Heart left ventricle (tissue), 16 donors: ENCODE measurements at regions of chr9 and their contacts with region 1.

Region 1: GRCh38 chr9:115900699-115901098 is 252.9 kb upstream of the PAPPA start:
- DNase-seq: no peak
- ATAC-seq: no peak
- H3K4me3 ChIP-seq: no peak overlapping the region
- H3K27ac ChIP-seq: no peak overlapping the region
- H3K4me1 ChIP-seq: no peaks in the 10 kb centered on the region
- H3K27me3 ChIP-seq: no peaks in the 10 kb centered on the region
- CTCF ChIP-seq: no peak
- POLR2A ChIP-seq: no peak

Region 2: GRCh38 chr9:115442054-115442453 is 458.6 kb before region 1 on chr9:
- intact Hi-C with region 1: no loop called
- DNase-seq: no peak
- ATAC-seq: peak in 3 of 4 donors; percentile 64 to 78 (median 74)
- H3K4me3 ChIP-seq: no peak overlapping the region
- H3K27ac ChIP-seq: peak overlapping the region in 6 of 12 donors; percentile 9 to 51 (median 31)
- H3K4me1 ChIP-seq: peaks cover 0 to 8% (median 0%) of the 10 kb centered on the region in 12 donors
- H3K27me3 ChIP-seq: no peaks in the 10 kb centered on the region
- CTCF ChIP-seq: no peak
- POLR2A ChIP-seq: no peak

Region 3: DNA sequence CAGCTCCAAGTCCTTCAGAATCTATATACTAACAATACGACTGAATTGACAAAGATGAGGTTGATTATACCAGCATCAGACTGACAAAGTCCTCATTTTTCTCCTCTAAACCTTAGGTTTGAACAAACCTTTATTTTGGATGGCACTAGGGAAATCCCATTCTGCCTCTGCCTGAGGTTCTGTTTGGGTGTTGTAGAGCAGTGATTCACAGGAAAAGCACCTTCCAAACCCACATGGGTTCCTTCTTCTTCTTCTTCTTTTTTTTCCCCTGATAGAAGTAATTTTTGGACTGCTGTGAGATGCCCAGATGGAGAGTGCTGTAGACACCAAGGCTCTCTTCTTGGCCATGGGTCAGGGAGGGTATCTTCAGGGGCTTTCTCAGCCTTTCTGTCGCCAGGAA is 88.0 kb after region 1 on chr9:
- intact Hi-C with region 1: loop called in 1 of 10 experiments (anchors 10 kb)
- DNase-seq: no peak
- ATAC-seq: no peak
- H3K4me3 ChIP-seq: no peak overlapping the region
- H3K27ac ChIP-seq: no peak overlapping the region
- H3K4me1 ChIP-seq: no peaks in the 10 kb centered on the region
- H3K27me3 ChIP-seq: no peaks in the 10 kb centered on the region
- CTCF ChIP-seq: no peak
- POLR2A ChIP-seq: no peak